Tibial artery (tissue), 4 donors: ENCODE measurements at regions of chr3 and their contacts with region 1.

Region 1: GRCh38 chr3:125055913-125056745 is at the start of gene HEG1:
- DNase-seq: peak; percentile 94 to 96
- H3K4me3 ChIP-seq: peak within 1 kb of the TSS; percentile 83 to 89
- H3K27ac ChIP-seq: peak within 1 kb of the TSS; percentile 96
- H3K4me1 ChIP-seq: peaks cover 0 to 60% (median 40%) of the 10 kb centered on the region in 4 donors
- H3K27me3 ChIP-seq: no peaks in the 10 kb centered on the region
- CTCF ChIP-seq: peak in 1 of 2 experiments; percentile 14

Region 2: DNA sequence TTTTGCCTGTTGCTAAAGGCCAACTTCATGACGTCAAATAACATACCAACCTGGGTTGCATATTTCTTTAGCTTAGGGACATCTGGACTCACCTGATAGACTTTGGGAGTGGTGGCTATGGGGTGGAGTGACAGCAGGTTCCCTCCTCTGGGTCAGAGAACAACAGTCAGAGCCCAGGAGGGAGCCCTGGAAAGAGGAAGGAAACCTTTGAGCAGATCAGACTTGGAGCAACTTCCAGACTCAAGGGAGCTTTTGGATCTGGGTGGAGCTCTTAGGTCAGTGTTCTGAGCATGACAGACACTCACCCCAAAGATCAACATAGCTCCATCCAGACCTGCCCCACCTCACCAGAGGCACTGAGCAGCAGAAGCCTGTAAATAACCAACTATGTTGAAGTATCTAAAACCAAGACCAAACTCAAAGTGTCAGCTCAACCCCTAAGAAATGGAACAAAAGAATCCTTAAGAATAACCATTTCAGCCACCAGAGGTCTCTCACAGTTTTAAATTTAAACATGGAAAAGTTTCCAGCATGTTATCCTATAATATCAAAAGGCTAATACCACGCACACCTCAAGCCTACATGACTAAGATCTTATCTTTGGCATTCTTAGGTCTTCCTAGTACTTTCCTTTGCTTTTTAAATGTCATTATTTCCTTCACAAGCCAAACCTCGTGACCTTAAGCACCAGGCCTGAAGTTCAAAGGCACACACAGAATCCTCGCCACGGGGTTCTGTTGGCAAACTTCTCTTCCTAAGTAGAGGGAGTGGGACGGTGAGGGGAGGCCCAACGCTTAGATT is 269.5 kb before region 1 on chr3:
- intact Hi-C with region 1: loop called (anchors 10 kb)
- DNase-seq: no peak
- H3K4me3 ChIP-seq: no peak overlapping the region
- H3K27ac ChIP-seq: peak overlapping the region; percentile 57 to 73
- H3K4me1 ChIP-seq: peaks cover 0 to 72% (median 59%) of the 10 kb centered on the region in 4 donors
- H3K27me3 ChIP-seq: no peaks in the 10 kb centered on the region
- CTCF ChIP-seq: peak; percentile 36 to 54

Region 3: DNA sequence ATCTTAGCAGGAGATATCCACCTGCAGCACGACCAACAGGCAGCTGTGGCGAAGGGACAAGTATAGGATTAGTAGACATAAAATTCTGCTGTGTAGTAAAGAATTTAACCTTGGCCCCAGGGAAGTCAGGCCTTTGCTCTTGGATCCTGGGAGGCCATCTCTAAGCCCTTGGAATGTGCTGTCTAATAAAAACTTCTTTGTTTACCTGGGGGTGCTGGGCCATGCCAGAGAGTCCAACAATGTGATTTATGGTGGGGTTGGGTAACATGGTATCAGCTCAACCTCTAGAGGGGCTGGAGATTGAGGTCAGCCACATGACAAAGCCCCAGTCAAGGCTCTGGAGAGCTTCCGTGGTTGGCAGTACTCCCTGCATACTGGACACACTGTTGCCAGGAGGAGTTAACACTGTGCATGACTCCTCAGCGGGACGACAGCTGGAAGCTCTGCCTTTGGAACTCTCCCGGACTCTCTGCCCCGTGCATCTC is 52.7 kb before region 1 on chr3:
- intact Hi-C with region 1: no loop called
- DNase-seq: peak in 1 of 2 donors; percentile 49
- H3K4me3 ChIP-seq: no peak overlapping the region
- H3K27ac ChIP-seq: no peak overlapping the region
- H3K4me1 ChIP-seq: no peaks in the 10 kb centered on the region
- H3K27me3 ChIP-seq: no peaks in the 10 kb centered on the region
- CTCF ChIP-seq: no peak

Region 4: GRCh38 chr3:125141596-125142419 is 85.7 kb after region 1 on chr3:
- intact Hi-C with region 1: loop called (anchors 10 kb)
- DNase-seq: peak; percentile 56 to 83
- H3K4me3 ChIP-seq: peak overlapping the region; percentile 50 to 57
- H3K27ac ChIP-seq: peak overlapping the region; percentile 65 to 69
- H3K4me1 ChIP-seq: peaks cover 0 to 51% (median 42%) of the 10 kb centered on the region in 4 donors
- H3K27me3 ChIP-seq: no peaks in the 10 kb centered on the region
- CTCF ChIP-seq: peak; percentile 20 to 22